Naive thymus-derived CD8-positive, alpha-beta T cell (primary cell): ENCODE measurements at regions of chr1 and their contacts with region 1.

Region 1: GRCh38 chr1:11907275-11908094 is 18.7 kb downstream of the KIAA2013 start:
- DNase-seq: peak; percentile 79 to 97 (median 94)
- ATAC-seq: peak; percentile 60 to 65
- H3K4me3 Mint-ChIP-seq: peak overlapping the region; percentile 88 to 97 (median 94)
- H3K27ac Mint-ChIP-seq: peak overlapping the region; percentile 99 to 100 (median 100)
- H3K4me1 Mint-ChIP-seq: peaks cover 24 to 54% (median 34%) of the 10 kb centered on the region in 4 donors
- H3K27me3 Mint-ChIP-seq: peaks cover 0 to 11% (median 3%) of the 10 kb centered on the region in 5 donors

Region 2: DNA sequence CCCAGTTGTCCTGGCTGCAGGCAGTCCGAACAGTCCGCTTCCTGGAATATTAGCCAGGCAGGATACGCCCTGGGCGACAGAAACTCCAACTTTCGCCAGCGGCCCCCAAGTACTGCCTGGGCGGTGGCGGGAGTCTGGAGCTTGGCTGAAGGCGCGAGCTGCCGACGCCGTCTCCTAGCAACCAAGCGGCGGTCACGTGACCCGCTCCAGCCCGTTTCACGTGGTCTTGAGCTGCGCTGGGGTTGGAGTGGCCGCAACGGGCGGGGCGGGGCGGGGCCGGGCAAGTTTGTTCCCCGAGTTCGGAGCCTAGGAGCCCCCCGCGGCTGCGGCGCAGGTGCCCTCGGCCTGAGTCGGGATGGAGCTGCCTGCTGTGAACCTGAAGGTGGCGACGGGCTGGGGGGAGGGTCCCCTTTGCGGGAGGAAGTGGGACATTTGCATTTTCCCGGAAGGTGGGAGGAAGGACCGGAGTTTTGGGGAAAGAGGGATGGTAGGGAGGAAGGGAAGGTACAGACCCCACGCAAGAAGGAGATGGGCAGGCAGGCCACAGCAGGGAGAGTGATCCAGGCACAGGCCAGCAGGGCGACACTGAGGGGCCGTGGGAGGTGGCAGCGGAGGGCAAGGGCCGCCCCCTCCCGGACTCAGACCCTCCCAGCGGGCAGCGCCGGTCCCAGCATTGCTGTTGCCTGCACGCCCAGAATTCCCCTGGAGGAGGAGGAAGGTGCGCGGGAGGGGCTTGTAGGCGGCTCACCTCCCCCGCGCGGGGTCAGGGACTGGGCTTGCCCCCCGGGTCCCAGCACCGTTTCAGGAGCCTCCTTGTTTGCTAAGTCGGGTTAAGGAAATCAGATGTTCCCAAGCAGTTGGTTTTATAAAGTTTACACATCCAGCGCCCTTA is 171.4 kb before region 1 on chr1 and contains the start of gene AGTRAP:
- POLR2A ChIA-PET with region 1: interaction called, 13 read pairs
- DNase-seq: peak; percentile 75 to 92 (median 78)
- ATAC-seq: peak; percentile 72 to 78
- H3K4me3 Mint-ChIP-seq: peak within 1 kb of the TSS; percentile 87 to 98 (median 94)
- H3K27ac Mint-ChIP-seq: peak within 1 kb of the TSS; percentile 39 to 97 (median 84)
- H3K4me1 Mint-ChIP-seq: peaks cover 36 to 81% (median 79%) of the 10 kb centered on the region in 4 donors
- H3K27me3 Mint-ChIP-seq: no peaks in the 10 kb centered on the region
- polyA plus RNA-seq, gene AGTRAP: 57.3 to 106 (median 90.0) TPM

Region 3: GRCh38 chr1:11838349-11839272 is 68.9 kb before region 1 on chr1:
- POLR2A ChIA-PET with region 1: interaction called, 22 read pairs
- DNase-seq: peak; percentile 56 to 83 (median 72)
- ATAC-seq: peak; percentile 96 to 97
- H3K4me3 Mint-ChIP-seq: no peak overlapping the region
- H3K27ac Mint-ChIP-seq: no peak overlapping the region
- H3K4me1 Mint-ChIP-seq: peaks cover 3 to 11% (median 4%) of the 10 kb centered on the region in 4 donors
- H3K27me3 Mint-ChIP-seq: no peaks in the 10 kb centered on the region

Region 4: GRCh38 chr1:11925938-11926292 is 18.4 kb after region 1 on chr1:
- POLR2A ChIA-PET with region 1: interaction called, 65 read pairs
- DNase-seq: peak in 2 of 10 donors; percentile 4 to 19
- ATAC-seq: peak; percentile 50 to 55
- H3K4me3 Mint-ChIP-seq: peak overlapping the region in 2 of 10 donors; percentile 18 to 84
- H3K27ac Mint-ChIP-seq: peak overlapping the region in 1 of 10 donors; percentile 81
- H3K4me1 Mint-ChIP-seq: peaks cover 16 to 46% (median 36%) of the 10 kb centered on the region in 4 donors
- H3K27me3 Mint-ChIP-seq: no peaks in the 10 kb centered on the region

Region 5: DNA sequence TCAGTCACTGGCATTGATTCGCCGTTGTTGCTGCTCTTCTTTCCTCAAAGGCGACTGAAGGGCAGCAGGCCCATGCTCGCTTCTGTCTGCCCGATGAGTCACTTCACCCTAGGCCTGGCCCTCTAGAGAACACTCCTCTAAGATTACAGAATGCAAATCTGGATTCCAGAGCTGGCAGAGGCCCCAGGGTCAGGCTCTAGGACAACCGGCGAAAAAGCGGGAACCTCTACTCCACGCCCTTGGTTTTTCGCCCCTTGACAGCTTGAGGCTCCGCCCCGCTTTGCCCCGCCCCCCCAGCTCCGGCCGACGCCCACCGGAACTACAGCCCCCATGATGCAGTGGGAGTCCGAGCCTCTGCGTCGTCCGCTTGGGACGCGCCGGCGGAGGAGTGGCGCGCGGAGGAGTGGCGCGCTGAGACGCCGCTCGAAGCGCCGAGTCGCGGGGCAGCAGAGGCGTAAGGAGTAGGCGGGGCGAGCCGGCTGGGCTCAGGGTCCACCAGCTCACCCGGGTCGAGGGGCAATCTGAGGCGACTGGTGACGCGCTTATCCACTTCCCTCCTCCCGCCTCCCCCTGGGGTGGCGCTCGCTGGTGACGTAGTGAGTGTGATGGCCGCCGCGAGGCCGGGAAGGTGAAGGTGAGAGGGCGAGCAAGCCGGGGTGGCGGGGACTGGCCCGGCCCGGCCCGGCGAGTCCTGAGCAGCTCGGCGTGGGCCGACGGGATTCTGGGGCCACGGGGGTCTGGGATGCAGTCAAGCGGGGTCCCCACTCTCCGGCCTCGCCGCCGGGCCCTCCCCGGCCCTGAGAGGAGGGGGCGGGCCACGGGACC is 72.6 kb after region 1 on chr1 and contains the start of gene MFN2:
- POLR2A ChIA-PET with region 1: interaction called, 93 read pairs
- DNase-seq: peak; percentile 87 to 96 (median 92)
- ATAC-seq: peak; percentile 92 to 93
- H3K4me3 Mint-ChIP-seq: peak within 1 kb of the TSS; percentile 87 to 96 (median 93)
- H3K27ac Mint-ChIP-seq: peak within 1 kb of the TSS; percentile 88 to 98 (median 95)
- H3K4me1 Mint-ChIP-seq: peaks cover 26 to 57% (median 50%) of the 10 kb centered on the region in 4 donors
- H3K27me3 Mint-ChIP-seq: no peaks in the 10 kb centered on the region
- polyA plus RNA-seq, gene MFN2: 29.1 to 38.0 (median 29.5) TPM